Mucosa of descending colon (tissue), 3 donors: ENCODE measurements at regions of chr10 and their contacts with region 1.

Region 1: DNA sequence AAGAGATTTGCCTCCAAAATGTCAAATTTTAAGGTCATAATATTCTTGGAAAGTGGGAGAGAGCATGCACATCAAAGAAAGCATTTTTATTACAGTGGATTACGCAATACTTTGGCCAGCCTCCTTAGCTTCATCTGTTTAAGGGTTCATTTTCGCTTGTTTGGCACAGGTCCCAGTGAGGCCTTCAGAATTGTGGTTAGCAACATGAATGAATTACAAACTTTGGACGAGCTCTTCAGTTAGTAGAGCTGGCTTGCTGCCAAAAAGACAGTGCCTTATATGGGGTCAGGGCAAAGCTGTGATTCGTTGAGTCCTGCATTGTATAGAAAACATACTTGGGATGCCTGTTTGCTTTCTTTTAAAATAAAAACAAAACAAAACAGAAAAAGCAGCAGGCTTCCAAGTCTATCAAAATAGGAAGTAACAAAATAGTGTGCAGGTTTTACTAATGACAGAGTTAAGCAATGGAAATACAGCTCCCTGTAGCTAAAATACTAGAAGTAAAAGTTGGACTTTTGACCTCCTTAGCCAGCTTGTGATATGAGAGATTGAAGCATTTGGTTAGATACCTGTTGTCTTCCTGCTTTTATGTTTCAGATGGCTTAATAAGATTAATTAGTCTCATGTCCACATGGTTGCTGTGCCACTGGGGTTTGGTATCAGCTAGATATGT is 190.8 kb downstream of the MLLT10 start:
- DNase-seq: peak in 2 of 3 donors; percentile 61 to 96
- ATAC-seq: peak; percentile 87
- H3K4me3 ChIP-seq: no peak overlapping the region
- H3K4me1 ChIP-seq: peaks cover 26% of the 10 kb centered on the region
- CTCF ChIP-seq: no peak

Region 2: DNA sequence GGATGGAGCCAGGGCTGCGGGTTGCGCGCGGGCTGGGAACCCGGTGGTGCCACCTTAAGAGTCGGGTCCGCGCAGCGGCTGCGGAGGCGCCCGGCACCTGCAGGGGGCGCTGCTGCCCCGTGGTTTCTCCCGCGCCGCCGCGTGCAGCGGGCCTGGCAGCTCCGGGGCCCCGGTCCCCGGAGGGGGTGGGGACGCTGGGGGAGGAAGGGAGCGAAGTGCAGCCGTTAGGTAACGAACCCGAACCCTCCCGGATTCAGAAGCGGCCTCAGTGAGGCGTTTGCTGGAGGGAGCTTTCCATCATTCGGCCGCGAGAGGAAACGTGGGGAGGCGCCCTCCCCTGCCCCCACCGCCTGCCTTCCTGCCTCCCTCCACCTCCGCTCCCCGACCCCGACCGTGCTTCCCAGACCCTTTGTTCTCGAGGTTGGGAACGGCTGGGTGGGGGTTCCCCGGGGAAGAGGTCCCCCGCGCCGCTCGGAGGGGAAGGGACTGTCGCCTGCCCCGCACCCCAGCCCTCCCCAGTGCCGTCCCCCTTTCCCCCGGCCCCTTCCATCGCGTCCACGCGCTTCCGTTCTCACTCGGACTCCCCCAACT is 229.0 kb before region 1 on chr10:
- intact Hi-C with region 1: loop called in 1 of 2 experiments (anchors 10 kb)
- DNase-seq: peak; percentile 83 to 89 (median 86)
- ATAC-seq: peak; percentile 94
- H3K4me3 ChIP-seq: no peak overlapping the region
- H3K4me1 ChIP-seq: peaks cover 20% of the 10 kb centered on the region
- CTCF ChIP-seq: peak; percentile 96

Region 3: GRCh38 chr10:21614000-21614399 is 110.8 kb before region 1 on chr10:
- intact Hi-C with region 1: no loop called
- DNase-seq: no peak
- ATAC-seq: no peak
- H3K4me3 ChIP-seq: no peak overlapping the region
- H3K4me1 ChIP-seq: no peaks in the 10 kb centered on the region
- CTCF ChIP-seq: no peak